Endothelial cell of umbilical vein (primary cell): ENCODE measurements at regions of chr4 and their contacts with region 1.

Region 1: GRCh38 chr4:144174401-144175067 is 34.0 kb upstream of the GYPA start:
- DNase-seq: peak; percentile 77
- H3K4me3 ChIP-seq: no peak overlapping the region
- H3K27ac ChIP-seq: no peak overlapping the region
- H3K4me1 ChIP-seq: peaks cover 15% of the 10 kb centered on the region
- H3K27me3 ChIP-seq: no peaks in the 10 kb centered on the region
- CTCF ChIP-seq: peak; percentile 8 to 12
- POLR2A ChIP-seq: no peak

Region 2: DNA sequence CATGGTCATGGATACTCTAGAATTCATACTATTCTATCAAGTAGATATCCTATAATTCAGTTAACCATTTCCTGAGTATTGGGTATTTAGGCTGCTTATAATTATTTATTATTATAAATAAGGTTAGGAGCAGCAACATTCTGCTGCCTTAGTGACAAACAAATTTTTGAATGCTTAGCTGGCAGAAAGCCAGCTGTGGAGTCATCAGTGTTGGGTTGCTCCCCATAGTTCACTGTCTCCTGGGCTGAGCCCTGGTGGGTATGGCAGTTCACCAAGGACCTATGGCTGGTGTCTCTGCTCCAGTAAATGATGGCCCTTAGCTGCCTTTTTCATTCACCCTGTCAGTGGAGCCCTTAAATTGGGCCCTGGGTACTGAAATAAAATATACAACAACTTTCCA is 599.2 kb before region 1 on chr4:
- CTCF ChIA-PET with region 1: no interaction called
- POLR2A ChIA-PET with region 1: no interaction called
- dilution Hi-C with region 1: no loop called
- intact Hi-C with region 1: no loop called
- DNase-seq: no peak
- H3K4me3 ChIP-seq: no peak overlapping the region
- H3K27ac ChIP-seq: no peak overlapping the region
- H3K4me1 ChIP-seq: no peaks in the 10 kb centered on the region
- H3K27me3 ChIP-seq: no peaks in the 10 kb centered on the region
- CTCF ChIP-seq: no peak
- POLR2A ChIP-seq: no peak

Region 3: DNA sequence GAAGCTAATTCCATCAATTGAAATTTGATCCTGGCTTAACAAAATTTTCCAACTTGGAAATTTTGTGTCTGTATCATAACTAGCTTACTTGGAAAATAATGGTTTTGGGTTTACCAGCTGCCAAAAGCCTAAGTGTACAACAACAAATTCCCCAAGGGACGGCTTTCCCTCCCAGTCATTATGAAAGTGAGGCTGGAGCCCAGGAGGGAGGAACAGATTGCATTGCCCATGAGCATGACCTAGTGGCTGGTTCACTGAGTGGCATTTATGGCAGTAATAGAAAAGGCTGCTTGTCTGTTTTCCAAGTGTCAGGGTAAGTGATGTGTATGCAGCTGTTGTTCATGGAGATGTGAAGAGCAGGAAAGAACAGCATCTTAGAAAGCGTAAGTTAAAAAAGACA is 400.6 kb after region 1 on chr4:
- CTCF ChIA-PET with region 1: interaction called, 5 read pairs
- POLR2A ChIA-PET with region 1: interaction called, 5 read pairs
- dilution Hi-C with region 1: no loop called
- intact Hi-C with region 1: loop called (anchors 1 kb)
- DNase-seq: peak; percentile 57
- H3K4me3 ChIP-seq: no peak overlapping the region
- H3K27ac ChIP-seq: no peak overlapping the region
- H3K4me1 ChIP-seq: peaks cover 26% of the 10 kb centered on the region
- H3K27me3 ChIP-seq: no peaks in the 10 kb centered on the region
- CTCF ChIP-seq: peak; percentile 43 to 46
- POLR2A ChIP-seq: no peak

Region 4: GRCh38 chr4:144754562-144755410 is 580.3 kb after region 1 on chr4:
- CTCF ChIA-PET with region 1: no interaction called
- POLR2A ChIA-PET with region 1: no interaction called
- dilution Hi-C with region 1: no loop called
- intact Hi-C with region 1: loop called (anchors 1 kb)
- DNase-seq: peak; percentile 73
- H3K4me3 ChIP-seq: no peak overlapping the region
- H3K27ac ChIP-seq: no peak overlapping the region
- H3K4me1 ChIP-seq: peaks cover 6% of the 10 kb centered on the region
- H3K27me3 ChIP-seq: no peaks in the 10 kb centered on the region
- CTCF ChIP-seq: peak; percentile 18 to 30
- POLR2A ChIP-seq: no peak

Region 5: GRCh38 chr4:144787365-144788258 is 613.1 kb after region 1 on chr4:
- CTCF ChIA-PET with region 1: interaction called, 7 read pairs
- POLR2A ChIA-PET with region 1: no interaction called
- dilution Hi-C with region 1: no loop called
- intact Hi-C with region 1: loop called (anchors 1 kb)
- DNase-seq: peak; percentile 61
- H3K4me3 ChIP-seq: no peak overlapping the region
- H3K27ac ChIP-seq: no peak overlapping the region
- H3K4me1 ChIP-seq: no peaks in the 10 kb centered on the region
- H3K27me3 ChIP-seq: peaks cover 0 to 2% of the 10 kb centered on the region in 2 experiments
- CTCF ChIP-seq: peak; percentile 40 to 57
- POLR2A ChIP-seq: no peak

Region 6: GRCh38 chr4:145061318-145061920 is 886.9 kb after region 1 on chr4:
- CTCF ChIA-PET with region 1: interaction called, 23 read pairs
- POLR2A ChIA-PET with region 1: no interaction called
- dilution Hi-C with region 1: no loop called
- intact Hi-C with region 1: loop called (anchors 1 kb)
- DNase-seq: peak; percentile 73
- H3K4me3 ChIP-seq: no peak overlapping the region
- H3K27ac ChIP-seq: no peak overlapping the region
- H3K4me1 ChIP-seq: peaks cover 6% of the 10 kb centered on the region
- H3K27me3 ChIP-seq: no peaks in the 10 kb centered on the region
- CTCF ChIP-seq: peak in 1 of 2 donors; percentile 13
- POLR2A ChIP-seq: no peak

Region 7: DNA sequence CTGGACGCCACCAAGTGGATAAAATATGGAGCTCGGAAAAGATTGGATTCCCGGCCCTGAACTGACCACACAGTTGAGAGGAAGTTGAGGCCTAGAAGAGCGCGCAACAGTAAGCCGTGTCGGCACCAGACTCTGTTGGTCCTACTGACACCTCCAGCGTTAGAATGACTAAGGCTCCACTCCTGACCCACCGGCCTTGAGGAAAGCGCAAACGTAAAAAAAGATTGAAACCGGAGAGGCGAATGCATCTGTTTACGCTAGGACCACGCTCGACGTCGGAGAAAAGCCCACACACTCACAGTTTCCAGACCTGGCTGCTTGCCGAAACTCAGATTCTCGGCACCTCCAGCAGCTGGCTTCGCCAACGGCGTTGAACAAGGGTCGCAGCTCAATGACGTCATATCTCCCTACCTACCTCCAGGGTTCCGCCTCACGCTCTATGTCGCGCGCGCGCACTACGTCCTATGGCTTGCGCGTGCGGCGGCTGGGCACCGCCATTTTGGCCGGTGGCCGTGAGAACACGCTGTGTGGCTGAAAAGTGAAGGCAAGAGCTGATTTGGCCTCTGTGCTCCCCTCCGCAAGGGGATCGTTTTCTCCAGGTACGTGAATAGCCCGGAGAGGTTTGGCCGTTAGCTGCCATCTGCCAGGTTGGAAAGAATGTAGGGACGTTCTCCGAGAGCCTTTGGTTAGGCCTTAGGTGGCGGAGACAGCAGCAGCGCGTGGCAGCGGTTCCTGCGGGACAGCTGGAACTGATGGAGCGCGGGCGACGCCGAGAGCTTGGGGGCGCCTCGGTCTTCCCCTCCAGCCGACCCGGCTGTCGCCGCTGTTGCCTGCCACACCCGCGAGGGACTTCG is 923.5 kb after region 1 on chr4 and contains the starts of genes ABCE1 and ANAPC10:
- CTCF ChIA-PET with region 1: interaction called, 3 read pairs
- POLR2A ChIA-PET with region 1: no interaction called
- dilution Hi-C with region 1: no loop called
- intact Hi-C with region 1: loop called (anchors 1 kb)
- DNase-seq: peak; percentile 98
- H3K4me3 ChIP-seq: peak within 1 kb of the TSS; percentile 45 to 95 (median 66)
- H3K27ac ChIP-seq: peak within 1 kb of the TSS; percentile 74
- H3K4me1 ChIP-seq: peaks cover 35% of the 10 kb centered on the region
- H3K27me3 ChIP-seq: no peaks in the 10 kb centered on the region
- CTCF ChIP-seq: peak in 1 of 2 donors; percentile 11
- POLR2A ChIP-seq: peak; percentile 82
- total RNA-seq, gene ABCE1: 107 and 114 TPM in 2 replicates
- total RNA-seq, gene ANAPC10: 21.4 and 24.0 TPM in 2 replicates